PC-3 (cell line): ENCODE measurements at regions of chr11 and their contacts with region 1.

Region 1: GRCh38 chr11:102994105-102994504 is 38.6 kb upstream of the MMP13 start:
- DNase-seq: peak; percentile 48
- ATAC-seq: no peak
- H3K4me3 ChIP-seq: no peak overlapping the region
- H3K27ac ChIP-seq: no peak overlapping the region
- H3K4me1 ChIP-seq: peaks cover 41% of the 10 kb centered on the region
- H3K27me3 ChIP-seq: no peaks in the 10 kb centered on the region
- CTCF ChIP-seq: no peak

Region 2: GRCh38 chr11:102513869-102514268 is 480.2 kb before region 1 on chr11:
- CTCF ChIA-PET with region 1: no interaction called
- POLR2A ChIA-PET with region 1: no interaction called
- intact Hi-C with region 1: no loop called
- DNase-seq: no peak
- ATAC-seq: no peak
- H3K4me3 ChIP-seq: no peak overlapping the region
- H3K27ac ChIP-seq: no peak overlapping the region
- H3K4me1 ChIP-seq: no peaks in the 10 kb centered on the region
- H3K27me3 ChIP-seq: no peaks in the 10 kb centered on the region
- CTCF ChIP-seq: no peak

Region 3: DNA sequence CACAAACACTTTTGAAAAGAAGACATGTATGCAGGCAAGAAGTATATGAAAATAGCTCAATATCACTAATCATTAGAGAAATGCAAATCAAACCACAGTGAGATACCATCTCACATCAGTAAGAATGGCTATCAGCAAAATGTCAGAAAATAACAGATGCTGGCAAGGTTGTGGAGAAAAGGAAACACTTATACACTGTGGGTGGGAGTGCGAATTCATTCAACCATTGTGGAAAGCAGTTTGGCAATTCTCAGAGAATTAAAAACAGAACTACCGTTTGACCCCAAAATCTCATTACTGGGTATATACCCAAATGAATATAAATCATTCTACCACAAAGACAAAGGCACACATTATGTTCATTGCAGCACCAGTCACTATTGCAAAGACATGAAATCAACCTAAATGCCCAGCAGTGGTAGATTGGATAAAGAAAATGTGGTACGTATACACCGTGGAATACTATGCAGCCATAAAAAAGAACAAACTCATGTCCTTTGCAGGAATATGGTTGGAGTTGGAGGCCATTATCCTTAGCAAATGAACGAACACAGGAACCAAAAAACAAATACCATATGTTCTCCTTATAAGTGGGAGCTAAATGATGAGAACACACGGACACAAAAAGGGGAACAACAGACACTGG is 57.1 kb before region 1 on chr11:
- CTCF ChIA-PET with region 1: no interaction called
- POLR2A ChIA-PET with region 1: no interaction called
- intact Hi-C with region 1: no loop called
- DNase-seq: no peak
- ATAC-seq: no peak
- H3K4me3 ChIP-seq: no peak overlapping the region
- H3K27ac ChIP-seq: no peak overlapping the region
- H3K4me1 ChIP-seq: peaks cover 11% of the 10 kb centered on the region; the same call in 1 of the 2 replicates
- H3K27me3 ChIP-seq: no peaks in the 10 kb centered on the region
- CTCF ChIP-seq: no peak

Region 4: DNA sequence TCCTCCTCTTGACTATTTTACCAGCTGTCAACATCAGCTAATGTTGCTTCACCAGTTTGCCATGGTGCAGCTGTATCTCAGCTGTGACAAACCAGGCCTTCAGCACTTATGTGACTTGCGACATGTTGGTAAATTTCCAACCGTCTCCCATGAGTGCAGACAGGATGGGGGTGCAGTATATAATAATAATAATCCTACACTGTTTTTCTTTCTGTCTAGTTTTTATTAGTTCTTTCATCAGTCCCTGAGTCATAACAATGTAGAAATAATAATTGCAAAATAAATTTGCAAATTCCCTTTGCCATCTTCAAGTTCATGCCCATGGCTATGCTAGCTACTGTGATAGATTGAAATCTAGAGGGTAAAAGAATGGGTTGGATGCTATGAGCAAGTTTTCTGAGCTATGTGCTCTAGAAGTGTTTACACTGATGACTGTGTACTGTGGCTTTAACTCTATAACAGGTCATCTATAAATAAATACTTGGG is 43.4 kb before region 1 on chr11:
- CTCF ChIA-PET with region 1: no interaction called
- POLR2A ChIA-PET with region 1: no interaction called
- intact Hi-C with region 1: loop called (anchors 5 kb)
- DNase-seq: peak; percentile 92
- ATAC-seq: peak; percentile 86
- H3K4me3 ChIP-seq: no peak overlapping the region
- H3K27ac ChIP-seq: 0 out of 2 replicates have a peak overlapping the region, but pooled peaks have one; percentile 0
- H3K4me1 ChIP-seq: peaks cover 33% of the 10 kb centered on the region
- H3K27me3 ChIP-seq: no peaks in the 10 kb centered on the region
- CTCF ChIP-seq: no peak

Region 5: DNA sequence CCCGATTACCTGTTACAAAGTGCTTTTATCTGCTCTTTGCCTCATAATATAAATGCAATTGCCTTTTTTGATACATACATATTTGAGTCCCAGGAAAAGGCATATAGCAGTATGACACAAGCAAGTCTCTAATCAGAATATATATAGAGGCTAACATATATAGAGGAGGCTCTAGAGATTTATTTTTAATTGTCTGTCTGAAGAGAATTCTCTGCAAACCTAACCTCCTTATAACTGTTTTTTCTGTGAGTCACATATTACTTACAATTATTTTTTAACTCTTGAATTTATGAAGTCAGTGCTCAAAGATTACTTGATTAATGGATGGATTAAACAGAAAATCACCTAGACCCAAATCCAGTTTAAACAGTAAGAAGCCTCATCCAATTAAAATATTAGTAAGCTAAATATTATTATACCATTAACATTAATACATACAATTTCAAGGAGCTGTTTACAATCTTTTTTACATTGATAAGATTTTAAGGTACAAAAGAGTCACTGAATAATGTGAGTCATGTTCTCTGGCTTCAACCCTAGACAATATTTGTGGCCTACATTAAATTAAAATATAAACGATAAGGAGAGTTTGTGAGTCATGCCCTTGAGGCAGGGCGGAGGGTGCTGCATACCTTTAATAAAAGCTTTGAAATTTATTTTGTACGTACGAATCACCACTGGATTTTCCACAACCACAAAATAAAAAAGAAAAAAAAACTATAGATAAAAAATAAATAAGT is 19.4 kb before region 1 on chr11:
- CTCF ChIA-PET with region 1: no interaction called
- POLR2A ChIA-PET with region 1: no interaction called
- intact Hi-C with region 1: loop called (anchors 2 kb)
- DNase-seq: peak; percentile 93
- ATAC-seq: peak; percentile 93
- H3K4me3 ChIP-seq: peak overlapping the region; percentile 2; the same call in 1 of the 2 replicates
- H3K27ac ChIP-seq: peak overlapping the region; percentile 43
- H3K4me1 ChIP-seq: peaks cover 19% of the 10 kb centered on the region
- H3K27me3 ChIP-seq: no peaks in the 10 kb centered on the region
- CTCF ChIP-seq: no peak

Region 6: DNA sequence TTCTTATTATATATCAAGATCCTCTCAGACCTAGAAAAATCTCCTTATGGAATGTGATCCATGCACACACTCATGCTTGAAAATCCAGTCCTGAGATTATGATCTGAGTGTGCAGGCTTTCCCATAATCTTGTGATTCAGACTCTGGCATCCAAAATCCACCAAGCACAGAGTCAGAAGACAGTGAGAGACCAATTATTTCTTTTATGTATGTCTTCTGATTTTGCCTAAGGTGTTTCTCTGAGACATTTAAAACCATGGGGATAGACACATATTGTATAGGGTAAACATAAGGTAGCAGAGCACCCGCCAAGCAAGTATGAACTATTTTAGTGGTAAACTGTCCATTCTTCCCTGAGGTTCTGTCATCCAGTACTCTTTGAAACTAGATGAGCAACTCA is 13.4 kb after region 1 on chr11:
- CTCF ChIA-PET with region 1: no interaction called
- POLR2A ChIA-PET with region 1: interaction called, 28 read pairs
- intact Hi-C with region 1: no loop called
- DNase-seq: peak; percentile 68
- ATAC-seq: no peak
- H3K4me3 ChIP-seq: no peak overlapping the region
- H3K27ac ChIP-seq: no peak overlapping the region
- H3K4me1 ChIP-seq: peaks cover 3% of the 10 kb centered on the region; the same call in 1 of the 2 replicates
- H3K27me3 ChIP-seq: no peaks in the 10 kb centered on the region
- CTCF ChIP-seq: no peak

Region 7: DNA sequence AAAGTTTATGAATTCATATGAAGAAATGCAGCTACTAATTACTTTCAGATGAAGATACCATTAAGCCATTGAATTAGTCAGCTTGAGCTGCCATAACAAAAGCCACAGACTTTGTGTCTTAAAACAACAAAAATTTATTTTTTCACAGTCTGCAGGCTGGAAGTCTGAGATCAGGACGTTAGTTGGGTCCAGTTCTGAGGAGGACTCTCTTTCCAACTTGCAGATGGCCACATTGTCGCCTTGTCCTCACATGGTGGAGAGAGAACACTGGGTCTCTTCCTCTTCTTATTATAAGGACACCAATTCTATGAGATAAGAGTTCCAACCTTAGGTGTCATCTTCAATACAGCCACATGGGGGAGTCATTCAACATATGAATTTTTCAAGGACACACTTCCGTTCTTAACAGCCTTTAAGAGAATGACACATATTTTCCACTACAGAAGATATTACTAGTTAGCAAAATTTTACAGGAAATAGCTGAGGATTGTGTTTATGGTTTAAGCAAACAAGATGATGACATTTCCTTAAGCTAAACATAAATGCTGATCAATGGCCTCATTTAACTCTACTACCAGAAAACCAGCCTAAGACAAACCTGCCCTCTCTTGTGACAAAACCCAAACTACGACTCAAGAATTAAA is 41.8 kb after region 1 on chr11:
- CTCF ChIA-PET with region 1: interaction called, 6 read pairs
- POLR2A ChIA-PET with region 1: no interaction called
- intact Hi-C with region 1: loop called (anchors 1 kb)
- DNase-seq: peak; percentile 96
- ATAC-seq: peak; percentile 90
- H3K4me3 ChIP-seq: no peak overlapping the region
- H3K27ac ChIP-seq: peak overlapping the region; percentile 31
- H3K4me1 ChIP-seq: peaks cover 8% of the 10 kb centered on the region
- H3K27me3 ChIP-seq: no peaks in the 10 kb centered on the region
- CTCF ChIP-seq: peak; percentile 89